ENCODE measurements at regions of chrX and their contacts with region 1.

Region 1: DNA sequence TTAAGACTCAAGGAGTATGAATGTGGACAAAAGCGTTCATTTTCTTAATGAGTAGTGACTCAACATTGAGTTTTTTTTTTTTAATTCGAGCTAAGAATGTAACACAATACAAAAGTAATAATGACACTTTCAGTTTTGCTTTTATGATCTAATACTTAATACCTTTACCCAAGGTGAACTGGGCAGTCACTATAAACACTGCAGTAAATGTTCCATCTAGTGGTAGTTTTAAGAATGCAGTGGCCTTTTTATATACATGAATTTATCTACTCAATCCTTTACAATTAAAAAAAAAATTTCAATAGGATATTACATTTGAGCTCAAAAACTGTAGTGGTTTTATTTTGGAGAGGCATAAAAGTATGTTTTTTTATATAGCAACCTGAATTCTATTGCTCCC is 33.9 kb downstream of the PDK3 start:
- DNase-seq: no peak
- H3K4me3 Mint-ChIP-seq: no peak overlapping the region
- H3K27ac Mint-ChIP-seq: no peak overlapping the region
- H3K4me1 Mint-ChIP-seq: peaks cover 22% of the 10 kb centered on the region
- H3K27me3 Mint-ChIP-seq: no peaks in the 10 kb centered on the region

Region 2: GRCh38 chrX:24259544-24260240 is 239.3 kb before region 1 on chrX:
- intact Hi-C with region 1: loop called (anchors 1 kb)
- DNase-seq: peak; percentile 5
- H3K4me3 Mint-ChIP-seq: no peak overlapping the region
- H3K27ac Mint-ChIP-seq: peak overlapping the region; percentile 44
- H3K4me1 Mint-ChIP-seq: peaks cover 27% of the 10 kb centered on the region
- H3K27me3 Mint-ChIP-seq: no peaks in the 10 kb centered on the region

Region 3: GRCh38 chrX:24371391-24371972 is 127.5 kb before region 1 on chrX:
- intact Hi-C with region 1: loop called (anchors 1 kb)
- DNase-seq: peak; percentile 34
- H3K4me3 Mint-ChIP-seq: peak overlapping the region; percentile 73
- H3K27ac Mint-ChIP-seq: peak overlapping the region; percentile 86
- H3K4me1 Mint-ChIP-seq: peaks cover 40% of the 10 kb centered on the region
- H3K27me3 Mint-ChIP-seq: no peaks in the 10 kb centered on the region

Region 4: GRCh38 chrX:24464836-24465531 is 34.0 kb before region 1 on chrX and contains the start of gene PDK3:
- intact Hi-C with region 1: loop called (anchors 2 kb)
- DNase-seq: peak; percentile 80
- H3K4me3 Mint-ChIP-seq: peak within 1 kb of the TSS; percentile 85
- H3K27ac Mint-ChIP-seq: peak within 1 kb of the TSS; percentile 87
- H3K4me1 Mint-ChIP-seq: peaks cover 33% of the 10 kb centered on the region
- H3K27me3 Mint-ChIP-seq: peaks cover 2% of the 10 kb centered on the region
- total RNA-seq, gene PDK3: 24.1 and 27.2 TPM in 2 replicates

Region 5: GRCh38 chrX:24720036-24720435 is 221.1 kb after region 1 on chrX:
- intact Hi-C with region 1: no loop called
- DNase-seq: no peak
- H3K4me3 Mint-ChIP-seq: no peak overlapping the region
- H3K27ac Mint-ChIP-seq: no peak overlapping the region
- H3K4me1 Mint-ChIP-seq: no peaks in the 10 kb centered on the region
- H3K27me3 Mint-ChIP-seq: no peaks in the 10 kb centered on the region

Measured in activated T-helper 1 cell treated with anti-CD3 and anti-CD28 coated beads, Interleukin-12 subunit alpha, Interleukin-12 subunit beta, Interleukin-2, Interleukin-4 antibody, amounts not matched to agents 30 ng/mL and 10 ng/mL and 1 ng/mL, durations not matched to agents 14 hours and 24 hours and 36 hours (primary cell).